ENCODE measurements at regions of chr7 and their contacts with region 1.

Region 1: DNA sequence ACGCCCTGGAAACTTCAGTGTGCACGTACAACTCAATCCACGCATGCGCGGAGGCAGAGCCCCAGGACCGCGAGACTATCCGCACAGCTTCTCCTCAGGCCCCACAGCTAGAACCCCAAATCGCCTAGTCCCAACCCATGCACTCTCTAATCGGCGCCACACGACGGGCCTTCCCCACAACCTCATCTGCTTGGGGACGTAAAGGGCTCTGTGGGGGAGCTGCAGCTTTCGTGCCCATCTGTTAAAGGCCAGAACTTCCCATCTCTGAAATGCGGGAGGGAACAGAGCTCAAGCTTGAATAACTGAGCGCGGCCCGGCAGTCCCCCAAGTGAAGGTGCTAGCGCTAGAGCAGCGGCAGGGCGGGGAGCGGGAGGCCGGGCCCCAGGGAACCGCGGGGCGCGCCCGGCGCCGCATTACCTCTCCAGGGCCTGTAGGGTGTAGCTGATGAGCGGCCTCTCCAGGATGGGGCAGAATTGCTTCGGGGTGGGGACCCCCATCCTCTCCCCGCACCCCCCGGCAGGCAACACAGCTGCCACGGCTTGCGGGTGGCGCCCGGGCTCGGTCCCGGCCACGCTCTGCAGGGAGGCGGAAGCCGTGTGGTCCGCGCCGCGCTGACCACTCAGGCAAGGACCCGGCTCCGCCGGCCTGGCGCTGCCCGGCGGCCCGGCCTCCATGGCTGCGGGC is 547 bp downstream of the CRPPA start:
- DNase-seq: peak; percentile 90 to 94
- H3K4me3 ChIP-seq: peak overlapping the region; percentile 67
- H3K4me3 Mint-ChIP-seq: peak overlapping the region; percentile 86
- H3K27ac Mint-ChIP-seq: peak overlapping the region; percentile 59
- H3K4me1 ChIP-seq: peaks cover 16% of the 10 kb centered on the region
- H3K4me1 Mint-ChIP-seq: peaks cover 23% of the 10 kb centered on the region
- H3K27me3 ChIP-seq: no peaks in the 10 kb centered on the region
- H3K27me3 Mint-ChIP-seq: no peaks in the 10 kb centered on the region
- CTCF ChIP-seq: peak; percentile 12 to 47

Region 2: GRCh38 chr7:15764851-15765382 is 655.9 kb before region 1 on chr7:
- CTCF ChIA-PET with region 1: no interaction called
- POLR2A ChIA-PET with region 1: interaction called, 3 read pairs
- intact Hi-C with region 1: loop called (anchors 5 kb)
- DNase-seq: peak; percentile 76 to 80
- H3K4me3 ChIP-seq: no peak overlapping the region
- H3K4me3 Mint-ChIP-seq: no peak overlapping the region
- H3K27ac Mint-ChIP-seq: peak overlapping the region; percentile 90
- H3K4me1 ChIP-seq: peaks cover 40% of the 10 kb centered on the region
- H3K4me1 Mint-ChIP-seq: peaks cover 21% of the 10 kb centered on the region
- H3K27me3 ChIP-seq: no peaks in the 10 kb centered on the region
- H3K27me3 Mint-ChIP-seq: no peaks in the 10 kb centered on the region
- CTCF ChIP-seq: no peak

Region 3: DNA sequence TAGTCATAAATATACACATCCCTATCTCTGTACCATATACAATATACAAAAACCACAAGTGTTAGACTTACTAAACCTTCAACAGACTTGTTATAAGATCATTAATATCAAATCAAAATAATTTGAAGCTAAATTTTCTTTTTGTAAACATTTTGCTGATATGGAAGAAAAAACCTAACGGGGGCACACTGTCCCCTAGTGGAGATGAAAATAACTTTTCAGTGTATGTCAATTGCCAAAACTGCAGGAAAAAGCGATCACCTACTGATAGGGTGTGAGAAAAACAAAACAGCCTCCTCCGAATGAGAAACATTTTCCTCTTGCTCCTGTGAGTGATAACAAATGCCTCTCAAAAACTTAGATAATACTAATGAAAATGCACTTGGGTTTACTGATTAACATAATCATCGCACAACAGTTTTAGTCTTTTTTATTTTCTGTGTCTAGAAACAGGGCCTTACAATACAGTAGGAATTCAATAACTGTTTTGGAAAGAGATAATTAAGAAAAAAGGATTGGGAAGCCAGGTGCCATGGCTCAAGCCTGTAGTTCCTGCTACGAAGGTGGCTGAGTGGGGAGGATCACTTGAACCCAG is 322.1 kb before region 1 on chr7:
- CTCF ChIA-PET with region 1: no interaction called
- POLR2A ChIA-PET with region 1: no interaction called
- intact Hi-C with region 1: loop called (anchors 1 kb)
- DNase-seq: peak in 1 of 2 experiments; percentile 29
- H3K4me3 ChIP-seq: no peak overlapping the region
- H3K4me3 Mint-ChIP-seq: no peak overlapping the region
- H3K27ac Mint-ChIP-seq: peak overlapping the region; percentile 69
- H3K4me1 ChIP-seq: peaks cover 19% of the 10 kb centered on the region
- H3K4me1 Mint-ChIP-seq: peaks cover 29% of the 10 kb centered on the region
- H3K27me3 ChIP-seq: no peaks in the 10 kb centered on the region
- H3K27me3 Mint-ChIP-seq: no peaks in the 10 kb centered on the region
- CTCF ChIP-seq: peak; percentile 63

Region 4: GRCh38 chr7:16271990-16272665 is 148.7 kb before region 1 on chr7:
- CTCF ChIA-PET with region 1: no interaction called
- POLR2A ChIA-PET with region 1: interaction called, 4 read pairs
- intact Hi-C with region 1: loop called (anchors 5 kb)
- DNase-seq: peak; percentile 45 to 46
- H3K4me3 ChIP-seq: no peak overlapping the region
- H3K4me3 Mint-ChIP-seq: peak overlapping the region; percentile 7
- H3K27ac Mint-ChIP-seq: peak overlapping the region; percentile 59
- H3K4me1 ChIP-seq: peaks cover 23% of the 10 kb centered on the region
- H3K4me1 Mint-ChIP-seq: peaks cover 18% of the 10 kb centered on the region
- H3K27me3 ChIP-seq: no peaks in the 10 kb centered on the region
- H3K27me3 Mint-ChIP-seq: no peaks in the 10 kb centered on the region
- CTCF ChIP-seq: no peak

Region 5: DNA sequence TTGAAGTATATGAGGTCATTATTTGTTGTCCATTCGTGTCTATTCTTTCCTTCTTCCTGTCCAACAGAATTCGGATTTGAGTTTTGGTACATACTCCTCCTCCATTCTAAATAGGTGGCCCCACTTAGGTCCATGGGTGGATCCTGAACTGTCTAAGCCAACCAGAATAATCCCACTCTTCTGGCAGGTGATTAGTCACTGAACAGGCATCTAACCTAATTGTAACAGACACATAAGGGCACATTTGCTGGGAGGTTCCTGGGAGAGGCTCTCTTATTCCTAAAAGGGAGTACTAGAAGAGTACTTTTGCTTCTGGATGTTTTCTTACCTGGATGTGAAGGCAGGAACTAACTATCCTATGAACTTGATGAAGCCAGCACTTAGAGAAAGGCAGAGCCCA is 122.7 kb after region 1 on chr7:
- CTCF ChIA-PET with region 1: interaction called, 4 read pairs
- POLR2A ChIA-PET with region 1: interaction called, 11 read pairs
- intact Hi-C with region 1: no loop called
- DNase-seq: no peak
- H3K4me3 ChIP-seq: no peak overlapping the region
- H3K4me3 Mint-ChIP-seq: no peak overlapping the region
- H3K27ac Mint-ChIP-seq: peak overlapping the region; percentile 85
- H3K4me1 ChIP-seq: peaks cover 38% of the 10 kb centered on the region
- H3K4me1 Mint-ChIP-seq: peaks cover 31% of the 10 kb centered on the region
- H3K27me3 ChIP-seq: no peaks in the 10 kb centered on the region
- H3K27me3 Mint-ChIP-seq: no peaks in the 10 kb centered on the region
- CTCF ChIP-seq: no peak

Region 6: GRCh38 chr7:16645593-16646471 is 225.0 kb after region 1 on chr7 and contains the starts of genes ANKMY2 and BZW2:
- CTCF ChIA-PET with region 1: no interaction called
- POLR2A ChIA-PET with region 1: no interaction called
- intact Hi-C with region 1: loop called (anchors 5 kb)
- DNase-seq: peak; percentile 97
- H3K4me3 ChIP-seq: peak within 1 kb of the TSS; percentile 92
- H3K4me3 Mint-ChIP-seq: peak within 1 kb of the TSS; percentile 98
- H3K27ac Mint-ChIP-seq: peak within 1 kb of the TSS; percentile 93
- H3K4me1 ChIP-seq: peaks cover 36% of the 10 kb centered on the region
- H3K4me1 Mint-ChIP-seq: peaks cover 39% of the 10 kb centered on the region
- H3K27me3 ChIP-seq: no peaks in the 10 kb centered on the region
- H3K27me3 Mint-ChIP-seq: no peaks in the 10 kb centered on the region
- CTCF ChIP-seq: no peak
- total RNA-seq, gene ANKMY2: 34.5 and 35.2 TPM in 2 replicates
- total RNA-seq, gene BZW2: 148 TPM in 2 replicates